ENCODE measurements at regions of chr1 and their contacts with region 1.

Region 1: DNA sequence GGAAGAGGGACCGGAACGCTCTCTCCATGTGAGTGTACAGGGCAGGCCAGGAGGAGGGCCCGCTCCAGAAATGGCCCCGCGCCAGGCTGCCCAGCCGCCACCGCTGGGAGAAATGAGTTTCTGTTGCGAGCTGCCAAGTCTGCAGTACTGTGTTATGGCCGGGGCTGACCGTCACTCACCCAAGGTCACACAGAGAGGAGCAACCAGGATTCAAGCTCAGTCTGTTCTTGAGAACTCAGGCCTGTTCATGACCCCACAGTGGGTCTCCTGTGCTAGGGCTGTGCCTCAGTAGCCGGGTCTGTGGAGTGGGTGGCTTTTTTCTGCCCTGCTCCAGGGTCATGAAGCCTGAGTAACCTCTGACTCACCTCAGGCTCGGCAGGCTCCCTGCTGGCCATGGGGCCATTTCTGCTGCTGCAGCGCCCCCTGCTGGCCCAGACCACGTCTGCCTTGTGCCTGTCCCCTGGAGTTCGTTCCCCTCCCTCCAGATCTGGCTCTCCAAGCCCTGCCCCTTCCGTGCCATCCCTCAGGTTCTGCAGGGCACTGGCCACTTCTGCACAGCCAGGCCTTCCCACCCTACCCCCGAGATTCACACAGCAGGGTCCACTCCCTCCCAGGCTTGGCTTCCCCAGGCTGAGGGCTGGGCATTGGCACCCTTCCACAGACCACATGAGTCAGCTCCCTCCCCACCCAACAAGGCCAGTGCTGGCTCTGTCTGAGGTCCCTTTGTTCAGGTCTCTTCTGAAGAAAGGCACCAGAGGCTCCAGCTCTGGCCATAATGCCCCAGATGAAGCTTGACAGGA is 51.8 kb downstream of the EDN2 start:
- DNase-seq: peak; percentile 33
- H3K4me3 ChIP-seq: no peak overlapping the region
- CTCF ChIP-seq: peak; percentile 98

Region 2: DNA sequence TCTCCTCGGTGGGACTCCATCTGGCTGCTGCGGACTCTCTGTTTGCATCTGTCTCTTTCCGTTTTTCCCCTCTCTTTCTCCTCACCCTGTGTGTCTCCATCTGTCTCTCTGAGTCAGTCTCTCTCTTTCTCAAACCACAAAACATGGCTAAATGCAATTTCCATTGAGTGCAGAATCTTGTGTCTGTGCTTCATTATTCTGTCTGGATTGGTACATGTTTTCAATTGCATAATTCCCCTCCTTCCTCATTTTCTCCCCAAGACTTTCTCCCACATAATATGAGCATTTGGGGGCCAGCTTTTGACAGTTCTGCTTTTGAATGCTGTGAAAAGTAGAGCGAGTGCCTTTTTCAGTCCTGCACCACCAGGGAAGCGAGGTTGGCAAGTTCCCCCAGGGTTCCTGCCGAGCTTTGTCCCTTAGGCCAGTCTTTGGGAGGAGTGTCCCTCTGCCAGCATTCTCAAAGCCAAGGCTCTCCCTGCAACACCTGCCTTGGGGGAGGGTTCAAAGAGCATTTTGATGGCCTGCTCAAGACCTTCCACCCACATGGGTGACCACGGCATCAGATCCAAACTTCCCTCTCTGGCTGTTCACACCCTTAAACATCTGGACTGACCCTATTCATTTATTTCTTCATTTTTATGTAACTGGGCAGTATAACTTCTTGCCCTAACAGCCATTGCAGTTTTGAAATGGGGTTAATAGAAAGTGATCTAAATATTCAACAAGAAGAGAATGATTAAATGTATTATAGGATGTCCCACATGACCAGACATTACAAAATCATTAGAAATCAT is 157.7 kb before region 1 on chr1:
- CTCF ChIA-PET with region 1: interaction called, 102 read pairs
- POLR2A ChIA-PET with region 1: no interaction called
- DNase-seq: no peak
- H3K4me3 ChIP-seq: no peak overlapping the region
- CTCF ChIP-seq: no peak

Region 3: GRCh38 chr1:41444246-41444645 is 11.6 kb after region 1 on chr1:
- CTCF ChIA-PET with region 1: interaction called, 122 read pairs
- POLR2A ChIA-PET with region 1: no interaction called
- DNase-seq: no peak
- H3K4me3 ChIP-seq: no peak overlapping the region
- CTCF ChIP-seq: peak; percentile 3

Region 4: DNA sequence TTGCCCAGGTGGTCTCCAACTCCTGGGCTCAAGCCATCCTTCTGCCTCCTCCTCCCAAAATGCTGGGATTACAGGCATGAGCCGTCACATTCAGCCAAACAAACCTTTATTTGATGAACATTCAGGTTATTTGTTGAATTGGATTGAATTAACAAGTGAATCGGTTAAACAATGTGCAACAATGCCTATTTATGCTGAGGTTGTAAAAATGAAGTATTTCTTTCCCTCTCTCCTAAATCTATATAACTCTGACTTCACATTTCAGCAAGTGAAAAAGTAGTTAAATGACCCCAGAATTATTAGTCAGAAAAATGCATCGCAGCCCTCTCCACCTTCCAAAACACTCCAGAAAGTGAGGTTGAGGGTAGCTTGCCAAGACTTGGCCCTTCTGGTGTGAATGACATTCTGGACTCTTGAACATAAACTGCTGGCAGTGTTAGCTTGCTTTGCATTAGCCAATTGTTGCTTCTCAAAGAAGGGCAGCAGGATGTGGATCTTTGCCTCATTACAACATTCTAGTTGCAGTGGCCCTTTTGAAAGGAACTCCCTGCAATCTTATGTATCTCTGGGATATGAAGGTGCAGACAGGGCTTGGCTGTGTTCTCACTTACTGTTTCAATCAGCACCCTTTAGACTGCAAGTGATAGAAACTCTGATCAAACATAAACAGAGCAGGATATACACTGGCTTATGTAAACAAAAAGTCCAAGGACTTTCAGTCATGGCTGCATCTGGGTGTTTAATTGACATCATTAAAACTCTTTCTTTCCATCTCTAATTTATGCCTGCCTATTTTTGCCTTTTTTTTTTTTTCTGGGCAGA is 29.3 kb after region 1 on chr1:
- CTCF ChIA-PET with region 1: interaction called, 21 read pairs
- POLR2A ChIA-PET with region 1: no interaction called
- DNase-seq: no peak
- H3K4me3 ChIP-seq: no peak overlapping the region
- CTCF ChIP-seq: no peak

Region 5: DNA sequence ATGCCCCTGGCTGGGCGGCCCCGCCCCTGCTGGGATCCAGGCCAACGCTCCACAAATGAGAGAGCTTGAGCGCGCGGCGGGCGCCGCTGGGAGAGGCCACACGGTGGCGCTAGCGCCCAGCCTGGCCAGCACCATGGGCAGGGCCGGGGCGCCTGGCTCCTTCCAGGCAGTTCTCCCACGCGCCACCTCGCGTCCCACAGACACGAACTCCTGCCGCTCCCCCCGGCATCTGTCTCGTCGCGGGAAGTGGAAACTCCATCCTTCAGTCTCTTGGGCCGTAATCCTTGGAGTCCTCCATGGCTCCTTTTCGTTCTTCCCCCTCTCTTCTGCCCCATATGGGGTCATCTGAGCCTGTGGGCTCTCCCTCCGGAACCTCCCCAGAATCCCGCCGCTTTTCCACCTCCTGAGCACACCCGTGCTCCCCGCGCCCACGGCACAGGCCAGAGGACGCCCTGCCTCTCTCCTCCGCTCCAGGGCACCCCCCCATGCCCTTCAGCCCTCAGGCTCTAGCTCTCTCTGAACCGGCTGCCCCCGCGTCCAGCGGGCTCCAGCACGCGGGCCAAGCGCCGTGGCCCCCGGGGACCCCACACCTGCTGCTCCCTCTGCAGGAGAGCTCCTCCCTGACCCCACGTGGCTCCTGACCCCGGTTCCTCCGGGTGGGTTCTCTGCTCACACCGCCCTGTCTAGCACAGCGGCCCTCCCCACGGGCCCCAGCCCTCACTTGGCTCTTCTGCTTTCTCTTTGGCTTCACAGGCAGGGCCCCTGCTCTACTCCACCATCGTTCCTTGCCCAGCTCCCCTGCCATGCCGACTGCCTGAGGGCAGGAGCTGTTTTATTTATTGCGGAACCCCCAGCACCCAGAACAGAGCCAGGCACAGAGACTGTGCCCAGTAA is 83.7 kb after region 1 on chr1:
- CTCF ChIA-PET with region 1: interaction called, 14 read pairs
- POLR2A ChIA-PET with region 1: no interaction called
- DNase-seq: no peak
- H3K4me3 ChIP-seq: peak overlapping the region; percentile 13
- CTCF ChIP-seq: peak; percentile 99

Region 6: GRCh38 chr1:41583658-41584547 is 151.2 kb after region 1 on chr1:
- CTCF ChIA-PET with region 1: no interaction called
- POLR2A ChIA-PET with region 1: no interaction called
- DNase-seq: no peak
- H3K4me3 ChIP-seq: no peak overlapping the region
- CTCF ChIP-seq: no peak

Measured in AG04449 (cell line).